Panc1 (cell line): ENCODE measurements at regions of chr5 and their contacts with region 1.

Region 1: DNA sequence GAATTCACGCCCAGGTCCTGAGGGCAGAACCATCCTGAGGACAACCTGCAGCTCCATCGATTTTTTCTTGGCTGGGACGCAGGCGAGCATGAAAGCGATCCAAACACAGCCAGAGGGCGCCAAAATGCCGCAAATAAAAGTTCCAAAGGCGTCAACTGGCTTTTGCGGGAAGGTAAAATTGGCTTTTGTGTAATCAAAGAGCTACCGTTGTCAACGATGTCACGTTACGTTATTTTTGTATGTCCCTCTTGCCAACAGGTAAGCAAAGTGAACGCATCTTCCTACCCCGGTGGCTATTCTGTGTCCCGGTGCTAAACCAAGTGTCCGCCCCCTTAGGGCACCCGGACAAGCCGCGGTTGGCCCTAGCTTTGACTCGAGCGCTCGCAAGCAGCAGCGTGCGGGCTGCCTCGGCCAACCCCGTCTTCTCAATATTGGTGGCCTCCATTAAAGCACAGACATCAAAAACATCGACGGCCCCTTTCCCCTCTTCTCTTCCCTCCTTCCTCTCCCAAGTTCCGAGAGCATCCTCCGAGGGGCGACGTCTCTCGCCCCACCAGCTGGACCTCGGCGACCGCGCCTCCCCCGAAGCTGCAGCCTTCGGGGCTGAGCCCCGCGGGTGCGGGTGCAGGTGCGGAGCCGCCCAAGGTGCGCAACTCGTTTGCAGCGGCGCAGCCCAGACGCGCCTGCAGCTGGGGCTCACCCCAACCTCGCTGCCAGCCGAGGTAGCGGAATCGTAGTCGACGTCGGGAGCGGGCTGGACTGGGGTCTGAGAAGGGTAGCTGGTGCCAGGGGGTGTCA is 1.1 kb upstream of the BASP1 start:
- DNase-seq: peak; percentile 93
- ATAC-seq: peak; percentile 79
- H3K4me3 ChIP-seq: peak overlapping the region; percentile 79 to 81
- H3K27ac ChIP-seq: peak overlapping the region; percentile 82
- H3K4me1 ChIP-seq: peaks cover 44% of the 10 kb centered on the region
- H3K27me3 ChIP-seq: no peaks in the 10 kb centered on the region
- CTCF ChIP-seq: peak; percentile 85

Region 2: DNA sequence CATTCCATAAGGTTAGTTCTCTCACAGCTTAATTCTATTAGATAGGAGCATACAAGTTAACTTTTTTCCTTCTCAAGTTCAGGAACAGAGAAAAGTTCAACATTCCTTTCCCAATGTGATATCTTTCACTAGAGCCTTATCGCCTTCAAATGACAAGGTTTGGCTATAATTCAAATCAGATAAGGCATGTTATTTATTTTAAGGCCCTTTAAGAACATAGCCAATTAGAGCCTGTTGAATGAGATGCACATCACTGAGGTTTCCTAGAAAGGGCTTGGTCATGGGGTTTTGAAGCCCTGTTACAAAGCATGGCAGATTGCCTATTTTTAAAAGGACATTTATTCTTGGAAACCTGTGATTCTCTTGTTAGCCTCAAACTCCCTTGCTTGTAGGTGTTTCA is 124.4 kb after region 1 on chr5:
- CTCF ChIA-PET with region 1: no interaction called
- POLR2A ChIA-PET with region 1: no interaction called
- in situ Hi-C with region 1: no loop called
- intact Hi-C with region 1: no loop called
- DNase-seq: no peak
- ATAC-seq: no peak
- H3K4me3 ChIP-seq: no peak overlapping the region
- H3K27ac ChIP-seq: no peak overlapping the region
- H3K4me1 ChIP-seq: peaks cover 10% of the 10 kb centered on the region; the same call in 1 of the 2 replicates
- H3K27me3 ChIP-seq: no peaks in the 10 kb centered on the region
- CTCF ChIP-seq: no peak

Region 3: GRCh38 chr5:17477573-17478265 is 261.3 kb after region 1 on chr5:
- CTCF ChIA-PET with region 1: no interaction called
- POLR2A ChIA-PET with region 1: interaction called, 15 read pairs
- in situ Hi-C with region 1: no loop called
- intact Hi-C with region 1: no loop called
- DNase-seq: no peak
- ATAC-seq: no peak
- H3K4me3 ChIP-seq: no peak overlapping the region
- H3K27ac ChIP-seq: no peak overlapping the region
- H3K4me1 ChIP-seq: no peaks in the 10 kb centered on the region
- H3K27me3 ChIP-seq: no peaks in the 10 kb centered on the region
- CTCF ChIP-seq: no peak

Region 4: GRCh38 chr5:18113721-18114120 is 897.3 kb after region 1 on chr5:
- CTCF ChIA-PET with region 1: no interaction called
- POLR2A ChIA-PET with region 1: no interaction called
- in situ Hi-C with region 1: no loop called
- intact Hi-C with region 1: loop called (anchors 10 kb)
- DNase-seq: peak; percentile 7
- ATAC-seq: no peak
- H3K4me3 ChIP-seq: no peak overlapping the region
- H3K27ac ChIP-seq: no peak overlapping the region
- H3K4me1 ChIP-seq: 0 out of 2 replicates have a peak, but pooled peaks cover 3% of the 10 kb centered on the region
- H3K27me3 ChIP-seq: no peaks in the 10 kb centered on the region
- CTCF ChIP-seq: peak; percentile 55; the same call in 1 of the 2 replicates

Region 5: GRCh38 chr5:18281682-18282557 is 1065.5 kb after region 1 on chr5:
- CTCF ChIA-PET with region 1: interaction called, 5 read pairs
- POLR2A ChIA-PET with region 1: no interaction called
- in situ Hi-C with region 1: loop called (anchors 25 kb)
- intact Hi-C with region 1: no loop called
- DNase-seq: peak; percentile 58
- ATAC-seq: peak; percentile 87
- H3K4me3 ChIP-seq: no peak overlapping the region
- H3K27ac ChIP-seq: no peak overlapping the region
- H3K4me1 ChIP-seq: no peaks in the 10 kb centered on the region
- H3K27me3 ChIP-seq: 0 out of 2 replicates have a peak, but pooled peaks cover 2% of the 10 kb centered on the region
- CTCF ChIP-seq: peak; percentile 66; the same call in 1 of the 2 replicates

Region 6: GRCh38 chr5:18299166-18299565 is 1082.8 kb after region 1 on chr5:
- CTCF ChIA-PET with region 1: no interaction called
- POLR2A ChIA-PET with region 1: no interaction called
- in situ Hi-C with region 1: loop called (anchors 25 kb)
- intact Hi-C with region 1: loop called (anchors 5 kb)
- DNase-seq: no peak
- ATAC-seq: no peak
- H3K4me3 ChIP-seq: no peak overlapping the region
- H3K27ac ChIP-seq: no peak overlapping the region
- H3K4me1 ChIP-seq: no peaks in the 10 kb centered on the region
- H3K27me3 ChIP-seq: no peaks in the 10 kb centered on the region; the same call in 1 of the 2 replicates
- CTCF ChIP-seq: no peak

Region 7: GRCh38 chr5:18305297-18305924 is 1089.0 kb after region 1 on chr5:
- CTCF ChIA-PET with region 1: interaction called, 3 read pairs
- POLR2A ChIA-PET with region 1: no interaction called
- in situ Hi-C with region 1: no loop called
- intact Hi-C with region 1: loop called (anchors 5 kb)
- DNase-seq: peak; percentile 53
- ATAC-seq: peak; percentile 71
- H3K4me3 ChIP-seq: no peak overlapping the region
- H3K27ac ChIP-seq: no peak overlapping the region
- H3K4me1 ChIP-seq: no peaks in the 10 kb centered on the region
- H3K27me3 ChIP-seq: no peaks in the 10 kb centered on the region; the same call in 1 of the 2 replicates
- CTCF ChIP-seq: peak; percentile 81